AG04450 (cell line): ENCODE measurements at regions of chr13 and their contacts with region 1.

Region 1: DNA sequence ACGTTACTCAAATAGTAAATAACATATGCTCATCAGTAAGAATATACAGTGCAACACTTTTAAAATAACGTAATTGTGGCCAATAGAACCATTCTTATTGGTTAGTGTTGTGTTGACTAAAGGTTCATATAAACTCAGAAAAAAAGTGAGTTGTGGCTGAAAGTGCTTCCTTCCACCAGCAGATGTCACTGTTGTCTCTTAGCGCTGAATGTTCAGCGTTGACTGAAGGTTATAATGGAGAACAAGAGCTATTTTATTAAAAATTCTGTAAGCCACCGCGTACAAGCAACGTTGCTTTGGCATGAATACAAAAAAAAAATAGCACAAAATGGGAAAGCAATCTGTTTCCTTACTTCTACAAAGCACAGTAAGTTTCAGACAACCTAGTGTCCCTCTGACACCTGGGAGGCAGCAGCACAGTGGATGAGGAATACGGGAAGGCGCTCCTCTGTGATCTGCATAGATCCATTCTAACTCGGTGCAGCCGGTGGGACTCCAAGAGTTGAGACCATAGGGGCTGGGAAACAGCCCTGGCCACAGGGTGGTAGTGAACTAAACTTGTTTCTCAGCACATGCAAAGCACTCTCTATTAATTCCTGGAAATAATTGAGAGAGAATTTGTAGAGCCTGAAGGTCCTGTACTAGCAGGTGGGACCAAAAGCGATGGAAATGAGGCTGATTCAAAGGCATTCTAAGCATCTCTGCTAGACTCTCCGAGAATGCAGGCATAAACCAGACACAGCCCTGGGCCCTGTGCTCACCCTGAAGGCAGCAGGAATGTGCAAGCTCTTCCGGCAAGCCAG is 24.0 kb upstream of the OXGR1 start:
- DNase-seq: peak; percentile 32
- H3K4me3 ChIP-seq: no peak overlapping the region
- H3K27ac ChIP-seq: no peak overlapping the region
- H3K27me3 ChIP-seq: peaks cover 7% of the 10 kb centered on the region
- CTCF ChIP-seq: peak; percentile 93

Region 2: DNA sequence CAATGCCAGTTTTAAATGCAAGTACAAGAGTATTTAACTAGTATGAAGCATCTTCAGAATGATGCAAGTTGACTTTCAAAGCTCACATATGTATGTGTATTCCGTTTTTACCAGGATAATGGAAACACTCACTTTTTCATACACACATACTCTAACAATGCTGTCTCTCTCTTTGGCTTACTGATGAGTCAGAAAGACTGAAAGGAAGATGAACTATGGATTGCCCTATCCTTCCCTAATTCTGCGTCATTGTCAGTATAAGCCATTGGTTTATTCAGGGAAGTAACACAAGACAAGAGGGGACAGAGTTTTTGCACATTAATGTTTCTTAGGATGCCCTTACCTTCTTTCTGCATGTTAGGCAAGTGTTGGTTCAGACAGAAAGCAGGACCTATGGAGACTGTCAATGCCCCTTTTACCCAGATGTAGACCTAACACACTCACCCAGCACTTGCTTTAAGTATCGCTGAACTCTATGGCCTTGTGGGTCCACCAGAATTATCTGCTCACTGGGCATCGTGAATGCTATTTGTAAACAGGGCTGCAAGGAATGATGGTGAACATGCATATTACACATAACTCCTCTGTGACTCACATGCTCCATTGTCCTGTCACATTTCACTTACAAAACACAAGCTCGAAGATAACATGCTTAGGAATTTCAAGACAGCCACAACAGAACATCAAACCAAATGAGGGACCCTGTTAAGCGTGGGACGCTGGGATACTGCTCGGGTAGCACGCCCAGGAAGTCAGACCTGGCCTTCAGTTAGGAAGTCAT is 13.9 kb before region 1 on chr13:
- CTCF ChIA-PET with region 1: interaction called, 34 read pairs
- POLR2A ChIA-PET with region 1: no interaction called
- DNase-seq: peak; percentile 18
- H3K4me3 ChIP-seq: no peak overlapping the region
- H3K27ac ChIP-seq: no peak overlapping the region
- H3K27me3 ChIP-seq: no peaks in the 10 kb centered on the region
- CTCF ChIP-seq: no peak

Region 3: GRCh38 chr13:97043302-97043701 is 25.1 kb after region 1 on chr13:
- CTCF ChIA-PET with region 1: interaction called, 11 read pairs
- POLR2A ChIA-PET with region 1: no interaction called
- DNase-seq: no peak
- H3K4me3 ChIP-seq: no peak overlapping the region
- H3K27ac ChIP-seq: no peak overlapping the region
- H3K27me3 ChIP-seq: no peaks in the 10 kb centered on the region
- CTCF ChIP-seq: no peak

Region 4: GRCh38 chr13:97221989-97222700 is 203.9 kb after region 1 on chr13 and contains the start of gene MBNL2:
- CTCF ChIA-PET with region 1: interaction called, 10 read pairs
- POLR2A ChIA-PET with region 1: no interaction called
- DNase-seq: peak; percentile 84
- H3K4me3 ChIP-seq: peak within 1 kb of the TSS; percentile 82
- H3K27ac ChIP-seq: peak within 1 kb of the TSS; percentile 91
- H3K27me3 ChIP-seq: no peaks in the 10 kb centered on the region
- CTCF ChIP-seq: no peak
- polyA plus RNA-seq, gene MBNL2: 42.4 and 44.0 TPM in 2 replicates

Region 5: GRCh38 chr13:97403893-97404750 is 385.9 kb after region 1 on chr13:
- CTCF ChIA-PET with region 1: interaction called, 13 read pairs
- POLR2A ChIA-PET with region 1: no interaction called
- DNase-seq: no peak
- H3K4me3 ChIP-seq: no peak overlapping the region
- H3K27ac ChIP-seq: no peak overlapping the region
- H3K27me3 ChIP-seq: no peaks in the 10 kb centered on the region
- CTCF ChIP-seq: no peak

Region 6: GRCh38 chr13:97574926-97575325 is 556.7 kb after region 1 on chr13:
- CTCF ChIA-PET with region 1: interaction called, 11 read pairs
- POLR2A ChIA-PET with region 1: no interaction called
- DNase-seq: peak; percentile 23
- H3K4me3 ChIP-seq: no peak overlapping the region
- H3K27ac ChIP-seq: no peak overlapping the region
- H3K27me3 ChIP-seq: peaks cover 3% of the 10 kb centered on the region
- CTCF ChIP-seq: peak; percentile 73

Region 7: DNA sequence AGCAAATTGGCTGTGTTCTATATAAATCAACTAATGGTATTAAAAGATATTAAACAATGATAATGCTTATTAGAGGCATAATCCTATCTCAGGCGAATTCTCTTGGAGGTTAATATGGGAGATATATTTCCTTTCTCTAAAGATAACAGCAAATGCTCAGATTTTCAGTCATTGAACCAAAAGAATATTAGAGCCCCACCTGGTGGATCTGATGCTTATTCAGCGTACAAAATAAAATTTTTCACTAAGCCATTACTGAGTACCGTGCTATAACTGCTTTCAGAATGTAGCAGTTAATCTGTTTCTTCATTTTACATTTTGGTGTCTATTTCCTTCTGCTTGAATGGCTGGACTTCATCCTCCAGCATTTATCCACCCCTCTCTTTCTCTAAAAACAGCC is 791.9 kb after region 1 on chr13:
- CTCF ChIA-PET with region 1: interaction called, 11 read pairs
- POLR2A ChIA-PET with region 1: no interaction called
- DNase-seq: no peak
- H3K4me3 ChIP-seq: no peak overlapping the region
- H3K27ac ChIP-seq: no peak overlapping the region
- H3K27me3 ChIP-seq: no peaks in the 10 kb centered on the region
- CTCF ChIP-seq: peak; percentile 59